Brain microvascular endothelial cell (primary cell): ENCODE measurements at regions of chr19 and their contacts with region 1.

Region 1: DNA sequence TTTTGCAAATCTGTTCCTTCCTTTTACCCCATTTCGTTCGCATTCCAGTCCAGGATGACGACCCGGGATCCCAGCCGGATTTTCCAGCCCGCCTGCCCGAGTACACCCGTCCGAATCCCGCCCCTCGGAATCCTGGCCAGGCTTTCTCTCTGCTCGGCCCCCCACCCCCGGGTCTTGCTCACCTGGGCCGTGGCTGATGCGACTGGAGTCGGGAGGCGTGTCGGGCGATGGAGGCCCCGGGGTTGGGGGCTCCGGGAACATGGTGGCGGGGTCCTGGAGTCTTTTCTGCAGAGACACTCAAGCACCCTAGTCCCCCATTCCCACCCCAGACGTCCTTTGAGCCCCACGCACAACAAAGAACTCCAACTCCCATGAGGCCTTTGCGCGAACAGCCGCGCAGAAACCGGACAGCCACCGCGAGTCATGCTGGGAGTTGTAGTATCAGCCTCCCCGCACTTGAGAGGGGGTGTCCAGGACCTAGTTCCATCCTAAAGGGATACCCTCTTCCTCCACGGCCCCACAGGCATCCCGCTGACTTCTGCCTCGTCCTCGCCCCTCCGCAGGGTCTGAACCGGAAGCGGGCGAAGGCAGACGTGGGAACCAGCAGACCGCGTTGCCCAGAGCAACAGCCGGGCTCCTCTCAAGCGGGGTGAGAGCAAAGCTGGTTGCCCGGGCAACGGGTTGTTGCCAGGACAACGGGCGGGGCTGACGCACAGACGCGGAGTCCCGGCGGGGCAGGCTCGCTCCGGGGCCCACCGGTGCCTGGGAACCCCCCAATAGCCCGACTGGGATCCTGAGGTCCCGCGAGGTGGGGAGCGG is 1.1 kb downstream of the SYT5 start:
- DNase-seq: peak; percentile 95
- H3K4me3 ChIP-seq: peak overlapping the region; percentile 42
- H3K27ac ChIP-seq: peak overlapping the region; percentile 55
- H3K27me3 ChIP-seq: peaks cover 5% of the 10 kb centered on the region
- CTCF ChIP-seq: no peak

Region 2: GRCh38 chr19:55117636-55118391 is 61.2 kb before region 1 on chr19 and contains the start of gene PPP1R12C:
- in situ Hi-C with region 1: loop called (anchors 10 kb)
- DNase-seq: peak; percentile 98
- H3K4me3 ChIP-seq: peak within 1 kb of the TSS; percentile 92
- H3K27ac ChIP-seq: peak within 1 kb of the TSS; percentile 80
- H3K27me3 ChIP-seq: no peaks in the 10 kb centered on the region
- CTCF ChIP-seq: no peak

Region 3: DNA sequence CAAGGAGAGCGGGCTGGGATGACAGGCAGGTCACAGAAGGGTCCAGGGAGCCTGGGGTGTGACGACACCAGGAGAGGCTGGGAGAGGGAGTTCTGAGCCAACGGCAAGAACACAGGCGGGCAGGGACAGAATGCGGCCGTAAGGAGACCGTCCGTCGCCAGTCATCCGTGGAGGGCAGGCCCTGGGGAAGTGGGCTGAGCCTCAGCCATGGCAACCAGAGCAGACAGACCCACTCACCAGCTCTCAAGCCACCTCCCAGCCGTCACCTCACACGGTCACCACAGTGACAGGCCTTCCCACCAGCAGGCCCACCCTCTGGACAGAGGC is 53.3 kb after region 1 on chr19:
- in situ Hi-C with region 1: no loop called
- DNase-seq: no peak
- H3K4me3 ChIP-seq: no peak overlapping the region
- H3K27ac ChIP-seq: no peak overlapping the region
- H3K27me3 ChIP-seq: no peaks in the 10 kb centered on the region
- CTCF ChIP-seq: no peak